Stomach (tissue), 19 donors: ENCODE measurements at regions of chr10 and their contacts with region 1.

Region 1: GRCh38 chr10:30783939-30784500 is 154.5 kb upstream of the LYZL2 start:
- DNase-seq: peak; percentile 79 to 95
- H3K4me3 ChIP-seq: peak overlapping the region; percentile 62 to 76 (median 64)
- H3K27ac ChIP-seq: peak overlapping the region; percentile 13 to 99 (median 92)
- H3K4me1 ChIP-seq: peaks cover 8 to 40% (median 23%) of the 10 kb centered on the region in 4 donors
- H3K27me3 ChIP-seq: no peaks in the 10 kb centered on the region
- CTCF ChIP-seq: peak in 6 of 7 experiments; percentile 35 to 88 (median 82)
- EP300 ChIP-seq: no peak
- POLR2A ChIP-seq: no peak

Region 2: GRCh38 chr10:30553625-30554439 is 230.2 kb before region 1 on chr10:
- intact Hi-C with region 1: no loop called
- DNase-seq: peak; percentile 35 to 79
- H3K4me3 ChIP-seq: peak overlapping the region in 2 of 4 donors; percentile 9 to 28
- H3K27ac ChIP-seq: peak overlapping the region; percentile 14 to 79 (median 68)
- H3K4me1 ChIP-seq: peaks cover 0 to 17% (median 11%) of the 10 kb centered on the region in 4 donors
- H3K27me3 ChIP-seq: no peaks in the 10 kb centered on the region
- CTCF ChIP-seq: no peak
- EP300 ChIP-seq: no peak
- POLR2A ChIP-seq: no peak

Region 3: GRCh38 chr10:31770307-31770902 is 986.4 kb after region 1 on chr10:
- intact Hi-C with region 1: loop called (anchors 10 kb)
- DNase-seq: peak; percentile 61 to 64
- H3K4me3 ChIP-seq: no peak overlapping the region
- H3K27ac ChIP-seq: peak overlapping the region in 2 of 5 donors; percentile 4 to 80
- H3K4me1 ChIP-seq: peaks cover 0 to 14% (median 3%) of the 10 kb centered on the region in 4 donors
- H3K27me3 ChIP-seq: no peaks in the 10 kb centered on the region
- CTCF ChIP-seq: peak in 5 of 7 experiments; percentile 68 to 86 (median 76)
- EP300 ChIP-seq: no peak
- POLR2A ChIP-seq: no peak